Sigmoid colon (tissue), 7 donors: ENCODE measurements at regions of chr6 and their contacts with region 1.

Region 1: DNA sequence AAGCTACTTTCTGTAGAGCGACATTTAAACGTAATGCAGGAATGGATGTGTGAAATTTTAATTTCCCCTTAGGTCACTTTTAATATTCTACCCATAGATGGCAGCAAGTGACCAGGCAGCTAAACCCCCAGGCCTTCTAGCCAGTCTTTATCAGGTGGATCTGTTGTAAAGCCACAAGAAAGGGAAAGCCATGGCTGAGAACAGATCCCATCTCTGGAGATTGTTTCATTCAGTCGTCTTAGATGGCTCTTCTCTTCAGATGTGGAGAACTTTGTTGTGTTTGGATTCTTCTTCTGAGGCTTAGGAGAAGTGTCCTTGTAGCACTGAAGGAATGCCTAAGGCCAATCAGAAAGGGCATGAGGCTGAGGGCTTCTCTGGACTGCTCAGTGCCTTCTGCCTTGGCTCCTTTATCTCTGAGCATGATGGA is 15.8 kb upstream of the RNF182 start:
- DNase-seq: peak; percentile 71
- H3K4me3 ChIP-seq: no peak overlapping the region
- H3K27ac ChIP-seq: no peak overlapping the region
- H3K4me1 ChIP-seq: no peaks in the 10 kb centered on the region
- H3K27me3 ChIP-seq: peaks cover 0 to 24% (median 0%) of the 10 kb centered on the region in 3 donors
- CTCF ChIP-seq: peak; percentile 52 to 77 (median 74)
- EP300 ChIP-seq: no peak
- POLR2A ChIP-seq: no peak

Region 2: GRCh38 chr6:12494161-12494560 is 1414.8 kb before region 1 on chr6:
- intact Hi-C with region 1: no loop called
- DNase-seq: no peak
- H3K4me3 ChIP-seq: no peak overlapping the region
- H3K27ac ChIP-seq: no peak overlapping the region
- H3K4me1 ChIP-seq: no peaks in the 10 kb centered on the region
- H3K27me3 ChIP-seq: no peaks in the 10 kb centered on the region
- CTCF ChIP-seq: no peak
- EP300 ChIP-seq: no peak
- POLR2A ChIP-seq: no peak

Region 3: GRCh38 chr6:13985663-13986325 is 76.8 kb after region 1 on chr6:
- intact Hi-C with region 1: no loop called
- DNase-seq: no peak
- H3K4me3 ChIP-seq: no peak overlapping the region
- H3K27ac ChIP-seq: no peak overlapping the region
- H3K4me1 ChIP-seq: no peaks in the 10 kb centered on the region
- H3K27me3 ChIP-seq: peaks cover 0 to 22% (median 8%) of the 10 kb centered on the region in 3 donors
- CTCF ChIP-seq: no peak
- EP300 ChIP-seq: no peak
- POLR2A ChIP-seq: no peak

Region 4: GRCh38 chr6:14001329-14002012 is 92.5 kb after region 1 on chr6:
- intact Hi-C with region 1: no loop called
- DNase-seq: no peak
- H3K4me3 ChIP-seq: no peak overlapping the region
- H3K27ac ChIP-seq: no peak overlapping the region
- H3K4me1 ChIP-seq: no peaks in the 10 kb centered on the region
- H3K27me3 ChIP-seq: no peaks in the 10 kb centered on the region
- CTCF ChIP-seq: no peak
- EP300 ChIP-seq: no peak
- POLR2A ChIP-seq: no peak

Region 5: GRCh38 chr6:14046476-14047068 is 137.6 kb after region 1 on chr6:
- intact Hi-C with region 1: loop called (anchors 1 kb)
- DNase-seq: no peak
- H3K4me3 ChIP-seq: no peak overlapping the region
- H3K27ac ChIP-seq: no peak overlapping the region
- H3K4me1 ChIP-seq: no peaks in the 10 kb centered on the region
- H3K27me3 ChIP-seq: peaks cover 0 to 5% (median 0%) of the 10 kb centered on the region in 3 donors
- CTCF ChIP-seq: peak in 2 of 4 experiments; percentile 40 to 56
- EP300 ChIP-seq: no peak
- POLR2A ChIP-seq: no peak

Region 6: DNA sequence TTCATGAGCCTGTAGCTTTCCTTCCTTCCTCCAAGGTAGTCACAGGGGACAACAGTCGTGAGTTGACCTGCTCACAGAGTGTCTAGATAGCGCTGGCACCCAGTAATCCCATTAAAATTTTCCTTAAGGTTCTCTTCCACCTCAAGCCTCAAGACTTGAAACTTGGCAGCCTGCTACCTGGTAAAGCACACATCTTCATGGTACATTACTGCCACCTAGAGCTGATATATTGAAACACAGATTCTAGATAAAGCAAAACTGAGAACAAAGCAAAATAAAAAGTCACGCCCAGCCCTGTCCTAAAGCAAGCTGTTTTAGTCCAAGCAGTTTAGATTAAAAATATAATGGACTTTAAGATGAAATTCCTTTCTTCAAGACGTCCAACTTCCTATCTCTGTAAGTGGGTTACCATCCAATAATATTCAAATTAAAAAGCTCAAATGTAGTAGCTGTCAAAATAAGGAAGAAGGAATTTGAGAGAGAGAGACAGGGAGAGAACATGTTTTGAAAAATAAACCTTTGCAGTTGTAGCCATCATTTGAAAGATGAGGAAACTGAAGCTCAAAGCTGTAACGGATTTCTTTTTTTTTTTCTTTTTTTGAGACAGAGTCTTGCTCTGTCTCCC is 157.9 kb after region 1 on chr6:
- intact Hi-C with region 1: loop called (anchors 1 kb)
- DNase-seq: no peak
- H3K4me3 ChIP-seq: no peak overlapping the region
- H3K27ac ChIP-seq: no peak overlapping the region
- H3K4me1 ChIP-seq: no peaks in the 10 kb centered on the region
- H3K27me3 ChIP-seq: no peaks in the 10 kb centered on the region
- CTCF ChIP-seq: peak; percentile 40 to 65 (median 57)
- EP300 ChIP-seq: no peak
- POLR2A ChIP-seq: no peak

Region 7: DNA sequence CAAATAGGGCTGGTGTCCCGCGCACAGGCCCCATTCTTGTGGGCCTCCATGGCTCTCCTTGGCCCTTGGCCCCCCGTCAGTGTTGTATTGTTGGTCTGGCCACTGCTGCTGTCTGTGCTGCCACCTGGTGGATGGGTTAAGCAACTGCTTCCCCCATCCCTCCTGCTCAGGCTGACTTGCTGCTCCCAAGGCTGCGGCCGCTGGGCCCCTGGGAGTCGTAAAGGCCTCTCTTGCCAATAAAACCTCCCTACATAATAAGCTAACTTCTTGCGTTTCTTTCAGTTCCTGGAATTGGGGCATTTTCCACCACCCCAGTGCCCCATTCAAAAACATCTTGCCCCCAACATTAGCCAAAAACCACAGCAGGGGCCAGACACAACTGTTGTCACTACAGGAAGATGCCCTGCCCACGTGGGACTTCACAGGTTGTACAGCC is 235.7 kb after region 1 on chr6:
- intact Hi-C with region 1: loop called (anchors 1 kb)
- DNase-seq: peak; percentile 78
- H3K4me3 ChIP-seq: no peak overlapping the region
- H3K27ac ChIP-seq: no peak overlapping the region
- H3K4me1 ChIP-seq: peaks cover 0 to 10% (median 4%) of the 10 kb centered on the region in 4 donors
- H3K27me3 ChIP-seq: no peaks in the 10 kb centered on the region
- CTCF ChIP-seq: peak; percentile 58 to 94 (median 80)
- EP300 ChIP-seq: no peak
- POLR2A ChIP-seq: no peak